ENCODE measurements at regions of chr13 and their contacts with region 1.

Region 1: DNA sequence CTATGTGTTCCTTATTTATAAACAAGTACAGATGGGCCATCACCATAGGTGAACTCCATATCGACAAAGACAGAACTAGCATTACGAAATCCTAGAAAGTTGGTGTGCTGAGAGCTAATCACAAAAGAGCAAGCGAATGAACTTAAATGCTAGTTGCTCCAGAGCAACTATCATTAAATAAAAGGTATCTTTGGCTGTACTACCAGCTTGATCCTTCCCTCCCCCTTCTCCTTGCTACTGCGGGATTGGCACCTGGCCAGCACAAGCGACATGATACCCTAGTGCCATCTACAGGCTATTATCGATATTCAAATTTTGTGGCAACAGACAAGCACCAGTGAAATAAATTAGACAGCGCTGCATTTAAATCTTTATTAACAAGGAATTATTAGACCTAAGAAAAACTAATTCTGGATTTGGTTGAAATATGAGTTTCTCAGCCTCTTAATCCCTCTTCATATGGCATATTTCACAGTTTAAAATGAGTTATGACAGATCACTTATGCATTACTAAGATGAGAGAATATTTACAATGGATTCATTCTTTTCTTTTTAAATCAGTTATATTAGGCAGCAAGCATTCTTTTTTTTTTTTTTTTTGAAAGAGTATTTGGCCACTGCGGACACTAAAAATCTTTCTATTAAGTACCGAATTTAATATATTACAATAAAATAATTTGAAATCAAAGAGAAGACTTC is 5.8 kb downstream of the PCDH9 start:
- DNase-seq: peak; percentile 85 to 86
- H3K4me3 ChIP-seq: peak overlapping the region; percentile 7; the same call in 1 of the 2 replicates
- H3K4me1 ChIP-seq: peaks cover 10% of the 10 kb centered on the region
- H3K27me3 ChIP-seq: no peaks in the 10 kb centered on the region

Region 2: DNA sequence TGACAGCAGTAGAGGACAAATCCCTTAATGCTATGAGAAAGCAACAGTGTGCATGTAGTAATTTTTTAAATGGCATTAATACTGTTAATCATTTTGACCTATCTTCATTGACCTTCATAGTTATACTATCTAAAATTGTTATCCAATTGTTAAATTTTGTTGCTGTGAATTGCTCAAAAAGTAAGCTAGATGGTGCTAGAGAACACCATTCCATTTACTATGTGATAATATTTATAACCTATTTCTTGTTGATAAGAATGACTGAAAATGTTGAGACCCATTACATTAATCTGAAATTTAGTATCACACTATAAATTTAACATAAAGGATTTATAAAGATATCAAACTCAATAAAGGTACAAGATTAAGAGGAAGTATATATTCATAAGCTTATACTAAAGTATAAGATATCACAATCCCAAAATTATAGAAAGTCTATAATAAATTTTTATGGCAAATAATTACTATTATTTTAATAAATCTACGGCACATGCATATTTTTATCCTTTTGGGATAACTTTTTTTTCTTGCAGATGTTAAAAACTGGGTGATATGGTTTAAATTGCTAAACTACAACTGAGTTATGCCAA is 1567.5 kb before region 1 on chr13:
- in situ Hi-C with region 1: loop called (anchors 25 kb)
- DNase-seq: peak in 1 of 2 experiments; percentile 29
- H3K4me3 ChIP-seq: no peak overlapping the region
- H3K4me1 ChIP-seq: no peaks in the 10 kb centered on the region
- H3K27me3 ChIP-seq: no peaks in the 10 kb centered on the region

Region 3: DNA sequence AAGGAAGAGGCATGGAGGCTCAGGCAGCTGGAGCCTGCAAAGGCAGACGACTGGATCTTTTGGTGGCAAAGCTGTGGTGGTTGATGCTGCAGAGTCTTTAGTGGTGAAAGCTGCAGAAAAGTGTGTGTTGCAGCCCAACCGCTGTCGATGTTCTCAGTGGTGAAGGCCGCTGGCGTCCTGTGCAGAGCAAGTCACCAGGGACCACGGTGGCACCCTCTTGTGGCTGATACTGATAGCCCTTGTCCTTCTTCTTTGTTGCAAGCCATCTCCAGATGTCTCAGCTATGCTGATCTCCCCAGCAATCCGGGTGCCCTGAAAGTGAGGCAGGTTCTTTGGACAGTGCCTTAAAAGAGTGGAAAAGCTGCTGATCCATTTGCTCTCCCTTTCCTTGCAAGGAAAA is 616.8 kb after region 1 on chr13:
- in situ Hi-C with region 1: no loop called
- DNase-seq: peak in 1 of 2 experiments; percentile 13
- H3K4me3 ChIP-seq: no peak overlapping the region
- H3K4me1 ChIP-seq: no peaks in the 10 kb centered on the region
- H3K27me3 ChIP-seq: no peaks in the 10 kb centered on the region

Region 4: DNA sequence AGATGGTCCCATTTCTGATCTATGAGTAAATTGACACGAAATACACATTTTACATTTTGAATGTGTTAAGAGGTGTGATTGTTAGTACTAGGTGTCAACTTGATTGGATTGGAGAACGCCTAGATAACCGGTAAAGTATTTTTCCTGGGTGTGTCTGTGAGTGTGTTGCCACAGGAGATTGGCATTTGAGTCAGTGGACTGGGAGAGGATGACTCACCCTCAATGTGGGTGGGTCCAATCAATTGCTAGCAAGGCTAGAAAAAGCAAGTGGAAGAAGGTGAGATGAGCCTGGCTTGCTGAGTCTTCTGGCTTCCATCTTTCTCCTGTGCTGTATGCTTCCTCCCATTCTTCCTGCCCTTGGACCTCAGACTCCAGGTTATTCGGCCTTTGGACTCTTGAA is 966.5 kb after region 1 on chr13:
- in situ Hi-C with region 1: no loop called
- DNase-seq: no peak
- H3K4me3 ChIP-seq: no peak overlapping the region
- H3K4me1 ChIP-seq: no peaks in the 10 kb centered on the region
- H3K27me3 ChIP-seq: no peaks in the 10 kb centered on the region

Measured in HAP-1 (cell line).